Psoas muscle (tissue), 8 donors: ENCODE measurements at regions of chr6 and their contacts with region 1.

Region 1: GRCh38 chr6:30102970-30103874 is 9.7 kb downstream of the TRIM31 start:
- DNase-seq: peak; percentile 84 to 90
- ATAC-seq: peak; percentile 82 to 92 (median 88)
- H3K4me3 ChIP-seq: peak overlapping the region; percentile 61
- H3K27ac ChIP-seq: peak overlapping the region; percentile 71
- H3K4me1 ChIP-seq: peaks cover 24% of the 10 kb centered on the region
- H3K27me3 ChIP-seq: peaks cover 0 to 44% (median 11%) of the 10 kb centered on the region in 3 donors
- CTCF ChIP-seq: peak; percentile 85

Region 2: GRCh38 chr6:29875257-29875656 is 228.0 kb before region 1 on chr6:
- intact Hi-C with region 1: no loop called
- DNase-seq: no peak
- ATAC-seq: no peak
- H3K4me3 ChIP-seq: no peak overlapping the region
- H3K27ac ChIP-seq: no peak overlapping the region
- H3K4me1 ChIP-seq: no peaks in the 10 kb centered on the region
- H3K27me3 ChIP-seq: no peaks in the 10 kb centered on the region
- CTCF ChIP-seq: no peak

Region 3: GRCh38 chr6:30067460-30068139 is 35.6 kb before region 1 on chr6:
- intact Hi-C with region 1: loop called in 1 of 2 experiments (anchors 2 kb)
- DNase-seq: no peak
- ATAC-seq: no peak
- H3K4me3 ChIP-seq: peak overlapping the region; percentile 87
- H3K27ac ChIP-seq: peak overlapping the region; percentile 86
- H3K4me1 ChIP-seq: peaks cover 34% of the 10 kb centered on the region
- H3K27me3 ChIP-seq: peaks cover 0 to 22% (median 7%) of the 10 kb centered on the region in 3 donors
- CTCF ChIP-seq: no peak

Region 4: DNA sequence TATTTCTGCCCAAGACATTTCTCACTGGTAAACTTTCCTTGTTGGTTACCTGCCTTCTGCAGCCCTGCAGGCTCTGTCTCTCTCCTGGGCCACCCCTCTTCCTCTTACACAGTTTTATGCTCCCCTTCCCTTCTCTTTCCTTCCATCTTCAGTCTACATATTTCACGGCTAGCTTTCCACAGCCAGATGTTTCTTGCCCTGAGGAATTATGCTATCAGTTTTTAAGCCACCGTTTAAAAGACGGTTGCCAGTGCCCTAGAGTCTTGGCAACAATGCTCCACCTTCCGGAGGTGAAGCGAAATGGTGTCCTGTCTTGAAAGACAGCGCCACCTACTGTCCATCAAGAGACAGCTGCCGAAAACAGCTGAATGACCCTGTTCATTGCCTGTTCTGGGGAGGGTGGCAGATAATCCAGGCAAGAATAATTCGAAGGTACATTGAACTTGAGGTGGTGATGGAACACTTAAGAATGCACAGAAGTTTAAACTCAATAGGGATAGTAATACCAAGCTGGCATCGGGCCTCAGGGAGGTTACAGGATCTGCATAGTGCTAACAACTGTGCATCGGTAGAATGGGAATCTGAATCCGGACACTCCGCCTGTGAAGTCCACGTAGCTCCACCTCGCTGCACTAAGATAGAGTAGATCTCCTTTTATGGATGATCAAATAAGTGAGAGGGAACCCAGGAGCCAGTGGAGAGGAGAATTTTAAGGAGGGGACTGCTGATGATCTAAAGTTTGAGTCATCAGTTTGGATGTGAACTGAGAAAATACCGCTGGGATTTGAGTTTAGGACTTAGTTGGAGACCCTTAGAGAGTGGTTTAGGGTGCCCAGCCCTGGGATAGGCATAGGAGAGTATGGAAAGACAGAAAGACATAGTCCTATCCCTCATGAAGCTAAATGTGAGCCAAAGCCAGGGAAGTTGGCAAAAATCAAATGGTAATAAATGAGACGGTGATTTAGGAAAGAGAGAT is 28.0 kb after region 1 on chr6:
- intact Hi-C with region 1: loop called (anchors 1 to 2 kb)
- DNase-seq: peak; percentile 30 to 58
- ATAC-seq: peak; percentile 89 to 97 (median 92)
- H3K4me3 ChIP-seq: no peak overlapping the region
- H3K27ac ChIP-seq: no peak overlapping the region
- H3K4me1 ChIP-seq: peaks cover 5% of the 10 kb centered on the region
- H3K27me3 ChIP-seq: peaks cover 4 to 62% (median 12%) of the 10 kb centered on the region in 3 donors
- CTCF ChIP-seq: peak; percentile 97

Region 5: GRCh38 chr6:30169658-30170614 is 66.7 kb after region 1 on chr6:
- intact Hi-C with region 1: loop called in 1 of 2 experiments (anchors 5 kb)
- DNase-seq: no peak
- ATAC-seq: peak in 3 of 4 donors; percentile 44 to 69 (median 64)
- H3K4me3 ChIP-seq: no peak overlapping the region
- H3K27ac ChIP-seq: no peak overlapping the region
- H3K4me1 ChIP-seq: no peaks in the 10 kb centered on the region
- H3K27me3 ChIP-seq: peaks cover 3 to 55% (median 5%) of the 10 kb centered on the region in 3 donors
- CTCF ChIP-seq: peak; percentile 61